ENCODE measurements at regions of chrX and their contacts with region 1.

Region 1: GRCh38 chrX:69615779-69616456 is at the start of gene EDA:
- DNase-seq: peak; percentile 88 to 92 (median 89)
- ATAC-seq: peak; percentile 96 to 99 (median 98)
- H3K4me3 ChIP-seq: peak within 1 kb of the TSS; percentile 51 to 90 (median 66)
- H3K27ac ChIP-seq: peak within 1 kb of the TSS in 9 of 12 donors; percentile 39 to 64 (median 56)
- H3K4me1 ChIP-seq: peaks cover 0 to 16% (median 0%) of the 10 kb centered on the region in 12 donors
- H3K27me3 ChIP-seq: peaks cover 0 to 20% (median 0%) of the 10 kb centered on the region in 9 donors
- CTCF ChIP-seq: no peak
- POLR2A ChIP-seq: no peak
- total RNA-seq, gene EDA: 4.2 to 13.6 (median 6.3) TPM

Region 2: DNA sequence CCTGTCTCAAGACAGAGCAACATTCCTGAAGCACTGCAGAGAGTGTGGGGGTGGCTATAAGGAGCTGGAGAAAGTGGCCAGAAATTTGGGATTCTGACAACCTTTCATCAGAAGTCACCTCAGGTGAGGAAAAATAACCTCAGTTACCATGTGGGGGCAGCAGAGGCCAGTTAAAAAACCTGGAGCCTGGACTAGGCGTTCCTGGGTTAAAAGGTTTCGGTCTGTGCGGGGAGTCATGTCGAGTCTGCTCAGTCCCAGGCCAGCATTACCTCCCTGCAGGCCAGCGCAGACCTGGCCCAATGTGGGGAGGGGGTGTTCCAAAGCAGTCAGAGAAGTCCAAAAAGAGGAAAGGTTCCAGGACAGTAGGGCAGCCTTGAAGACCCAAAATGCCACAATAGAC is 122.7 kb before region 1 on chrX:
- intact Hi-C with region 1: loop called in 1 of 10 experiments (anchors 5 kb)
- DNase-seq: peak in 1 of 5 donors; percentile 26
- ATAC-seq: peak in 3 of 4 donors; percentile 39 to 64 (median 42)
- H3K4me3 ChIP-seq: no peak overlapping the region
- H3K27ac ChIP-seq: no peak overlapping the region
- H3K4me1 ChIP-seq: no peaks in the 10 kb centered on the region
- H3K27me3 ChIP-seq: peaks cover 0 to 34% (median 0%) of the 10 kb centered on the region in 9 donors
- CTCF ChIP-seq: peak in 11 of 12 donors; percentile 11 to 50 (median 46)
- POLR2A ChIP-seq: no peak

Region 3: GRCh38 chrX:69538321-69538876 is 77.5 kb before region 1 on chrX:
- intact Hi-C with region 1: loop called in 9 of 10 experiments (anchors 1 to 10 kb)
- DNase-seq: peak; percentile 66 to 84 (median 75)
- ATAC-seq: peak; percentile 87 to 98 (median 95)
- H3K4me3 ChIP-seq: peak overlapping the region in 11 of 12 donors; percentile 17 to 61 (median 51)
- H3K27ac ChIP-seq: peak overlapping the region in 2 of 12 donors; percentile 38 to 70
- H3K4me1 ChIP-seq: peaks cover 0 to 9% (median 0%) of the 10 kb centered on the region in 12 donors
- H3K27me3 ChIP-seq: peaks cover 0 to 21% (median 0%) of the 10 kb centered on the region in 9 donors
- CTCF ChIP-seq: peak; percentile 64 to 80 (median 73)
- POLR2A ChIP-seq: no peak

Region 4: GRCh38 chrX:69562904-69563578 is 52.9 kb before region 1 on chrX:
- intact Hi-C with region 1: loop called in 1 of 10 experiments (anchors 10 kb)
- DNase-seq: no peak
- ATAC-seq: peak in 2 of 4 donors; percentile 67 to 72
- H3K4me3 ChIP-seq: no peak overlapping the region
- H3K27ac ChIP-seq: no peak overlapping the region
- H3K4me1 ChIP-seq: no peaks in the 10 kb centered on the region
- H3K27me3 ChIP-seq: peaks cover 0 to 27% (median 0%) of the 10 kb centered on the region in 9 donors
- CTCF ChIP-seq: no peak
- POLR2A ChIP-seq: no peak

Region 5: GRCh38 chrX:69748055-69748454 is 132.1 kb after region 1 on chrX:
- intact Hi-C with region 1: no loop called
- DNase-seq: no peak
- ATAC-seq: no peak
- H3K4me3 ChIP-seq: no peak overlapping the region
- H3K27ac ChIP-seq: no peak overlapping the region
- H3K4me1 ChIP-seq: no peaks in the 10 kb centered on the region
- H3K27me3 ChIP-seq: no peaks in the 10 kb centered on the region
- CTCF ChIP-seq: no peak
- POLR2A ChIP-seq: no peak

Region 6: GRCh38 chrX:70013466-70014381 is 397.8 kb after region 1 on chrX:
- intact Hi-C with region 1: loop called in 2 of 10 experiments (anchors 5 kb)
- DNase-seq: peak in 4 of 5 donors; percentile 40 to 75 (median 62)
- ATAC-seq: peak; percentile 95 to 97 (median 96)
- H3K4me3 ChIP-seq: no peak overlapping the region
- H3K27ac ChIP-seq: peak overlapping the region; percentile 29 to 86 (median 65)
- H3K4me1 ChIP-seq: peaks cover 0 to 15% (median 0%) of the 10 kb centered on the region in 12 donors
- H3K27me3 ChIP-seq: peaks cover 0 to 37% (median 0%) of the 10 kb centered on the region in 9 donors
- CTCF ChIP-seq: peak in 2 of 12 donors; percentile 5 to 15
- POLR2A ChIP-seq: peak in 1 of 2 donors; percentile 12

Region 7: DNA sequence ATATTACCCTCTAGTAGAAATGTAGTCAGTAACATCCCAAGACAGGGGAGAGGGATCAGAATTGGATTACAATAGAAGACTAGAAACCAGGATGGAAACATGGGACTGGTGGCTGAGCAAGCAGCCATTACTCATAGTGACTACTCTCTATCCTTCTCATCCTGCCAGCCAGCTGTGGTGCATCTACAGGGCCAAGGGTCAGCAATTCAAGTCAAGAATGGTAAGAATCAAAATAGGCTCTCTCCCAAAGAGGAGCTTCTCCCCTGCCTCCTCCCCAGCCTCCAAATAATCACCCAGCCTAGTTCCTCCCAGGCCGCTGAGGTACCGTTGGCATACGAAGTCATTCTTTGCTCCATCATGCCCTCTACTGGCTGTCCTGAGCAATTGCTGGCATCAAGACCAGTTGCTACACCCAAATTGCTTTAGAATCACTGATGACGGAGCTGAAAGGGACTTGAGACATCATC is 414.4 kb after region 1 on chrX:
- intact Hi-C with region 1: loop called in 7 of 10 experiments (anchors 5 to 10 kb)
- DNase-seq: peak in 4 of 5 donors; percentile 35 to 45 (median 40)
- ATAC-seq: peak in 3 of 4 donors; percentile 63 to 74 (median 67)
- H3K4me3 ChIP-seq: no peak overlapping the region
- H3K27ac ChIP-seq: no peak overlapping the region
- H3K4me1 ChIP-seq: peaks cover 0 to 22% (median 1%) of the 10 kb centered on the region in 12 donors
- H3K27me3 ChIP-seq: peaks cover 0 to 26% (median 0%) of the 10 kb centered on the region in 9 donors
- CTCF ChIP-seq: peak; percentile 59 to 76 (median 65)
- POLR2A ChIP-seq: no peak

Region 8: GRCh38 chrX:70128071-70128470 is 512.2 kb after region 1 on chrX:
- intact Hi-C with region 1: no loop called
- DNase-seq: no peak
- ATAC-seq: no peak
- H3K4me3 ChIP-seq: no peak overlapping the region
- H3K27ac ChIP-seq: no peak overlapping the region
- H3K4me1 ChIP-seq: peaks cover 0 to 8% (median 2%) of the 10 kb centered on the region in 12 donors
- H3K27me3 ChIP-seq: no peaks in the 10 kb centered on the region
- CTCF ChIP-seq: no peak
- POLR2A ChIP-seq: no peak

Measured in heart left ventricle (tissue), 16 donors.